ENCODE measurements at regions of chr10 and their contacts with region 1.

Region 1: GRCh38 chr10:15719899-15720634 is at the start of gene ITGA8:
- DNase-seq: no peak
- H3K4me3 ChIP-seq: peak within 1 kb of the TSS; percentile 51
- H3K27me3 ChIP-seq: peaks cover 7% of the 10 kb centered on the region; the same call in 1 of the 2 replicates
- CTCF ChIP-seq: peak; percentile 63
- polyA plus RNA-seq, gene ITGA8: 10.1 and 11.3 TPM in 2 replicates

Region 2: GRCh38 chr10:14954001-14954770 is 765.9 kb before region 1 on chr10 and contains the start of gene DCLRE1C:
- CTCF ChIA-PET with region 1: no interaction called
- POLR2A ChIA-PET with region 1: interaction called, 26 read pairs
- DNase-seq: peak; percentile 64
- H3K4me3 ChIP-seq: peak within 1 kb of the TSS; percentile 74
- H3K27me3 ChIP-seq: no peaks in the 10 kb centered on the region
- CTCF ChIP-seq: no peak
- polyA plus RNA-seq, gene DCLRE1C: 4.1 and 6.0 TPM in 2 replicates

Region 3: GRCh38 chr10:15433850-15434537 is 286.1 kb before region 1 on chr10:
- CTCF ChIA-PET with region 1: interaction called, 124 read pairs
- POLR2A ChIA-PET with region 1: no interaction called
- DNase-seq: no peak
- H3K4me3 ChIP-seq: peak overlapping the region; percentile 37
- H3K27me3 ChIP-seq: no peaks in the 10 kb centered on the region
- CTCF ChIP-seq: peak; percentile 59

Region 4: DNA sequence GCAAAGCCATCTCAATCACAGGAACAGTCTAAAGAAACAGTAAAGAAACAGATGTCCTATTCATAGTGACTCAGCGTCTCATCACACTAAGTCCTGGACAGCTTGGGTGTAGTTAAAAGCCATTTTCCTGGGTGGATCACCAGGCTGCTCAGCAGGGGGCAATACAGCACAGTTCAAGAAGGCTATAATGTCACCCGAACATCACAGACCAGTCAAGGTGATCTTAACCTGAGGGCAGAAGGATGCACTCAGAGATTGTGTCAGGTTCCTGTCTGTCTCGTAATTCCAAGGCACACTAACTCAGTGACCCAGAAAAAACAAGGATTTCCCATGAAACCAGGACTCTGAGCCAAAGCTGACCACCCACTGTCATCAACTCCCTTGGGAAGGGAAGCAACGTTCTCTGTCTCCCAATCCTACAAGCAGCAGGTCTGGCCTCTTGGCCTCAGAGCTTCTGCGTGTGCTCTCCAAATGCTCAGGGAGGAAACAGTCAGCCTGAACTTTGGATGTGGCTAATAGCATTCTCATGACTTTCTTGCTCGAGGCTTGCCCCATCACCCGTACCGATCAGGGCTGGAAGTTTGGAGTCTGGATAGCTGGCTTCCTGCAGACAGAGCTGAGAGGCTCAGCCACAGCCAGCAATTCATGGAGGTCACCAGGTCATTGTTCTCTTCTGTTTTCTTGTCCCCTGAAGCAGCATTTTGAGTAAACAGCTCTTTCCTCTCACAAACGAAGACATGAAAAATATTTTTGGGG is 258.5 kb before region 1 on chr10:
- CTCF ChIA-PET with region 1: interaction called, 29 read pairs
- POLR2A ChIA-PET with region 1: interaction called, 24 read pairs
- DNase-seq: peak; percentile 84
- H3K4me3 ChIP-seq: no peak overlapping the region
- H3K27me3 ChIP-seq: no peaks in the 10 kb centered on the region
- CTCF ChIP-seq: peak; percentile 59

Region 5: GRCh38 chr10:15751038-15751797 is 31.2 kb after region 1 on chr10:
- CTCF ChIA-PET with region 1: no interaction called
- POLR2A ChIA-PET with region 1: no interaction called
- DNase-seq: no peak
- H3K4me3 ChIP-seq: no peak overlapping the region
- H3K27me3 ChIP-seq: peaks cover 4% of the 10 kb centered on the region
- CTCF ChIP-seq: no peak

Region 6: DNA sequence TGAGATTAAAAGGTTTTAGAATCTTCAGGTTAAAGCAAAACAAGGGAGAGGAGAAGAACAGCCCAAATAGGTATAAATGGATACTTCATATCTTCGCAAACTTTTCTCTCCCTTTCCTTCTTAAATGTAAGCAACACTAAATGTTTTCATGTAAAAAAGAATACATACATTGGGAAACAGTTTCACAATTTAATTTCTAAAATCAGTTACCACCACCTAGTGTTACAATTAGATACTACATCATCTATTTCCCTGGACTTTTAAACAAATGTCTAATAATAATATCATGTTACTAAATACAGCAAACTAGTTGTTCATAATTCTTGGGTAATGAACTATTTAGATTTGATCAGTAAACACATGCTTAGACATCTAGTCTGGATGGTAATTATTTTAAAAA is 104.4 kb after region 1 on chr10:
- CTCF ChIA-PET with region 1: interaction called, 25 read pairs
- POLR2A ChIA-PET with region 1: interaction called, 3 read pairs
- DNase-seq: no peak
- H3K4me3 ChIP-seq: no peak overlapping the region
- H3K27me3 ChIP-seq: no peaks in the 10 kb centered on the region
- CTCF ChIP-seq: peak; percentile 45

Region 7: DNA sequence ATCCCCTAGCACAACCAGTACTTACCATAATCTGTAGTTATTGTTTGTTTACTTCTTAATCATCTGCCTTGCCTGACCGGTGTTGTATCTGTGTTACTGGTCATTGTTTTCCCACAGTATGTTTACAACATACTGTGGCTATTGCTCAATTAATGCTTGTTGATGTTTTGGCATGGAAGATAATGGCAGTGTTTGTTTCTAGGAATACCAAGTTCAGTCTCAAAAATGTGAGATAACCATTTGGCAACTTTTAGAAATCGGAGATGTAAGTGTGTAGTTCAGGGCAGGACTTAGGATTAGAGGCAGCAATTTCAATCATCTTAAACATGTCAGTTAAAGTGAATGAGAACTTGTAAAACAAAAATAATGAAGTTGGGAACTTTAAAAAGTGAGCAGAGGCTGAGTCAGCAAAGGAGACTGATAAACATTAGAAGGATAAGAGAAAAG is 132.1 kb after region 1 on chr10:
- CTCF ChIA-PET with region 1: no interaction called
- POLR2A ChIA-PET with region 1: no interaction called
- DNase-seq: no peak
- H3K4me3 ChIP-seq: no peak overlapping the region
- H3K27me3 ChIP-seq: no peaks in the 10 kb centered on the region
- CTCF ChIP-seq: no peak